K562 (cell line): ENCODE measurements at regions of chr2 and their contacts with region 1.

Region 1: DNA sequence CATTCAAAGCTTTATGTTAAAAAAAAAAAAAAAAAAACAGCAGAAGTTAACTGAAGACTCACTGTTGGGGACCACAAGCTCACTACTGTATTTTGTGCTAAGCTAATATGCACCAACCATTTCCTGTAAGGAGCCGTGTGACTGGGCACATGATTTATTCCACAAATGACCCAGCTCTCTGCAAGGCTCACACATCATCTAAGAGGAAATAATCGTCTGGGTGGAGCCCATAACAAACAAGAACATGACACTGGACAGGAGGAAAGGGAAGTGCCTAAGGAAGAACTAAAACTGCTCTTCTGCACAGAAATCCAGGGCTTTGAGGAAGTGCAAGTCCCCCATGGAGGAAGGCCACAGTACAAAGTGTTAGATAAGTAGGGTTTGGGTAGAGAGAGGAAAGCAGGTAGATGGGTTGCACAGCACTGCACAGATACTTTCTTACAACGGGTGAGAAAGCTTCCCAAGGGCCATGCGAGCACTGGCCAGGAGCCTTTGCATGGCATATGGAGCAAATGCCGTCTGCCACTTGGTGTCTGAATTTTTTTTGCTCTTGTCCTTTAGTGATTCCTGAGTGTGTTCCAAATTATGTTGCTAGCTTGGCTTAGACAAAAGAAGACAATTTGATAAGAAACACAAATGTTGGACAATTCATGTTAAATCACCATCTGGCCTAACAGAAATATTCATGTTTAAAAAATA is 24.4 kb downstream of the NFE2L2 start:
- DNase-seq: no peak
- ATAC-seq: peak; percentile 5
- H3K4me3 ChIP-seq: no peak overlapping the region
- H3K27ac ChIP-seq: peak overlapping the region; percentile 26; the same call in 2 of the 3 replicates
- H3K4me1 ChIP-seq: peaks cover 18 to 44% of the 10 kb centered on the region in 2 experiments
- H3K27me3 ChIP-seq: no peaks in the 10 kb centered on the region
- CTCF ChIP-seq: no peak
- EP300 ChIP-seq: no peak
- POLR2A ChIP-seq: no peak
- RAD21 ChIP-seq: no peak

Region 2: DNA sequence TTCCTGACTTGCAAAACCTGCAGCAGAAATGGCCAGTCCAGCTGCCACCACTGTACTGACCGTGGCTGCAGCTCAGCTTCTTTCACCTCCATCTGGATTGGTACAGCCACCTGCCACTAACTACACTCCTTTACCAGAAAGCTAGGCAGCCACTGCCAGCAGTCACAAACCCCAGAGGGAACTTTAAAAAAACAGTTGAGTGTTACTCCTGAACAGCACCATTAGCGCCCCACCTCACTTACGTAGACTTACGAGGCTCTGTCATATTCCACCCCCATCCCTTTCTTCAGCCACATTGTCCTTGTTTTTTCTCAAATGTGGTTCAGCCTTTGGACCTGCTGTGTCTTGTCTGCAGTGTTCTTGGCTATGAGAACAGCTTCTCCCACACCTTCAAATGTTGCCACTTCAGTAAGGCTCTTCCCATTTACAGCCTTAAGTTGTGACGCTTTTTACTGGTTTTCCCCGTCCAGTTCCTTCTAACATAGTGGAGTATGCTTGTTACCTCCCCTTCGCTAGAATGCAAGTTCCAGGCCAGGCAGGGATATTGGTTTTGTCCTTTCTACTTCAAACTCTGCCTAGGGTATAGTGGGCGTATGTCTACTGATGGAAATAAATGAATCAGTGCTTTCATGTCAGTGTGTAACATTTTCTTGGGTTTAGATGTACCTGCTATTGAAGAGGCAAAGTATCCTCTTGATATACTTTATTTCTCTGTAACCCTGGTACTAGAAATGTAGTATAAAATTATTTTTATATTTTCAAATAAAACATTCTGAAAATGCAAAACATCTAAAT is 10.4 kb before region 1 on chr2:
- CTCF ChIA-PET with region 1: no interaction called
- POLR2A ChIA-PET with region 1: interaction called, 70 read pairs
- in situ Hi-C with region 1: no loop called
- intact Hi-C with region 1: no loop called
- DNase-seq: no peak
- ATAC-seq: peak; percentile 32
- H3K4me3 ChIP-seq: no peak overlapping the region
- H3K27ac ChIP-seq: no peak overlapping the region
- H3K4me1 ChIP-seq: peaks cover 0 to 2% of the 10 kb centered on the region in 2 experiments; a peak in 2 of 5 replicates
- H3K27me3 ChIP-seq: no peaks in the 10 kb centered on the region
- CTCF ChIP-seq: no peak
- EP300 ChIP-seq: no peak
- POLR2A ChIP-seq: peak; percentile 60
- RAD21 ChIP-seq: no peak

Region 3: DNA sequence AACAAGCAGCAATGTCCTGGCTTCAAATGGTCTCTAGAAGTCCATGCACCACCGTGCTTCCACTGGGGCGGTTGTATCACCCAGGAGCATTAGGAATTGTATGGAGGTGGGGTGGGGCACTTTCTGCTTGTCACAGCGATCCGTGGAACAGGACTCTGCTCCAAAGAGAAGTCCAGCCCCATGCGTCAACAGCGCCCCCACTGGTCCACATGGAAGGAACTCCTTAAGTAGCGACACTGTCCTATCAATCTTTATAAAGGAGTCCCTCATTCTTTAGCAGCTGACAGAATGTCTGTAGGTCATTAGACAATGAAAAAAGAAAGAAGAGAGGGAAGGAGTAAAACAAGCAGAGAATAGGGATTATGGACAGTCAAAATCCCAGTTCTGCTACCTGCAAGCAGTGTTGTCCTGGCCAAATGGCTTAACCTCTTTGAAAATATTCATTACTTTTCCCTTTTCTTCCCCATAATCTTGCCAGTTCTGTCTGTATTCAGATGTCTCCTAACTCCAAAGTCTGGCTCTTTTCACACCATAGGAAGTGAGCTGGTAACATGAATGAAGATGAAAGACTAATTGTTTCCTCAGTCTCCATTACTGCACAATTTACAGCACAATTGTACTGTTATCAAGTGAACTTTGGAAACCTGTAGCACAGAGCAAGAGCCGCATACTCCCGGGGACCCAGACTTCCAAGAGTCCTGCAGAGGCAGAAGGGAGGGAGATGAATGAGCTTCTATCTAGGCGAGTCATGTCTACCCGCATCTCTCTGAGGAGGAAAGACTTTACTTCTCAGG is 14.5 kb after region 1 on chr2:
- CTCF ChIA-PET with region 1: no interaction called
- POLR2A ChIA-PET with region 1: interaction called, 23 read pairs
- in situ Hi-C with region 1: no loop called
- intact Hi-C with region 1: no loop called
- DNase-seq: peak; percentile 69 to 93 (median 73)
- ATAC-seq: peak; percentile 81
- H3K4me3 ChIP-seq: 0 out of 2 replicates have a peak overlapping the region, but pooled peaks have one; percentile 4
- H3K27ac ChIP-seq: peak overlapping the region; percentile 59
- H3K4me1 ChIP-seq: peaks cover 35 to 79% of the 10 kb centered on the region in 2 experiments
- H3K27me3 ChIP-seq: no peaks in the 10 kb centered on the region
- CTCF ChIP-seq: peak; percentile 88 to 98 (median 96)
- EP300 ChIP-seq: no peak
- POLR2A ChIP-seq: no peak
- RAD21 ChIP-seq: peak; percentile 62 to 81